ENCODE measurements at regions of chr11 and their contacts with region 1.

Region 1: GRCh38 chr11:45917623-45918330 is at the start of gene PEX16:
- DNase-seq: peak; percentile 97
- H3K4me3 Mint-ChIP-seq: peak within 1 kb of the TSS; percentile 98
- H3K27ac Mint-ChIP-seq: peak within 1 kb of the TSS; percentile 92
- H3K4me1 Mint-ChIP-seq: peaks cover 22% of the 10 kb centered on the region
- H3K27me3 Mint-ChIP-seq: peaks cover 10% of the 10 kb centered on the region
- total RNA-seq, gene PEX16: 37.4 and 44.6 TPM in 2 replicates

Region 2: DNA sequence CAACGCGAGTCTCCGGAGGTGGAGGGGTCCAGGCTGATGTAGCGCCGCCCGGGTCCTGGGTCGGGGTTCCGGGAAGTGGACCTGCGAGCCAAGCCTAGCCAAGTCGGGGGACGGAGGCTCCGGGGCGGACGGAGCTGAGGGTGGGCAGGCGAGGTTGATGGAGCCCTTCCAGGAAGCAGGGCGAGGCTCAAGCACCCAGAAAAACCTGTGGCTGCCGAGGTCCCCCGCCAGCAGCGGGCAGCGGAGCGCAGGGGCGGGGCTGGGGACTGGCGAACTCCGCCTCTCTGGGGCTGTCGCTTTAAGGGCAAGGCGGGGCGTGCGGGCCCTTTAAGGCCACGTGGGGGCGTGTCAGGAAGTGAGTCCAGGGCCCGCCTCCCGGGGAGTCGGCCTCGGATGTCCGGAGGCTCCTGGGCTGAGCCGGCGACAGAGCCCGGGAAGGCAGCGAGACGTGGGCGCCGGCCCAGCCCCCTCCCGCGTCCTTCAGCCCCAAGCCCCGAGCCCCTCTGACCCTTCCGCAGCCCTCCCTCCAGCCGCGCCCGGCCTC is 112.9 kb before region 1 on chr11 and contains the start of gene SLC35C1:
- intact Hi-C with region 1: loop called (anchors 1 kb)
- DNase-seq: peak; percentile 96
- H3K4me3 Mint-ChIP-seq: peak within 1 kb of the TSS; percentile 97
- H3K27ac Mint-ChIP-seq: peak within 1 kb of the TSS; percentile 92
- H3K4me1 Mint-ChIP-seq: peaks cover 38% of the 10 kb centered on the region
- H3K27me3 Mint-ChIP-seq: no peaks in the 10 kb centered on the region
- total RNA-seq, gene SLC35C1: 16.3 and 18.2 TPM in 2 replicates

Region 3: DNA sequence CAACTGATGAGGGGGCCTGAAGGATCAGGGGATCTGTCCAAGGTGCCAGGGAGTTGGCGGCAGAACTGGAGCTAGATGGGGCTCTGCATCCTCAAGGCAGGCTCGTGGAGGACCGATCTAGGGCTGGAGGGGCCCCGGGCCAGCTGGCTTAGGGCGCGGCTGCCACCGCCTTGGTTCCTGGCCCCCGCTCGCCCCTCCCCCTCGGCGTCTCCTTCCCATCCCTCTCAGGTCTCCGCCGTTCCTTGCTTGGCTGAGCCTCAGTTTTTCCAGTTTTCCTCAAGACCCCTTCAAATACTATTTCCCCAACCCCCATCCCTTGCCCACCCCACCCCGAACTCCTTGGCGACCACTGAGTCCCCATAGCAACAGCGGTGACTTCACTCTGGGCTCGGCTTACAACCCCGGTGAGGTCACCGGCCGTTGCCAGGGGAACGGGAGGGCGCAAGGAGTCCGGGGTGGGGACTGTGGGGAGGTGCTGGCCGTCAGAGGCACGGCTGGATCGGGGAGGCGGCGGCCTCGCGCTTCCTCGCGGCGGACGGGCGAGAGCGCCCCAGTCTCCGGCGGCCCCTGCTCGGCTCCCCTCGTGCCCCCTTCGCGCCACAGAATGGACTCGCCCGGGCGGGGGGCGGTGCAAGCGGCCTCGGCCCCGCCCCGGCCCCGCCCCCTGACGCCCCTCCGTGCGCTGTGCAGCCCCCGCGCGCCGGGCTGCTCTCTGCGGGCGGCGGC is 18.2 kb before region 1 on chr11:
- intact Hi-C with region 1: loop called (anchors 1 kb)
- DNase-seq: peak; percentile 66
- H3K4me3 Mint-ChIP-seq: peak overlapping the region; percentile 42
- H3K27ac Mint-ChIP-seq: no peak overlapping the region
- H3K4me1 Mint-ChIP-seq: no peaks in the 10 kb centered on the region
- H3K27me3 Mint-ChIP-seq: peaks cover 30% of the 10 kb centered on the region

Region 4: DNA sequence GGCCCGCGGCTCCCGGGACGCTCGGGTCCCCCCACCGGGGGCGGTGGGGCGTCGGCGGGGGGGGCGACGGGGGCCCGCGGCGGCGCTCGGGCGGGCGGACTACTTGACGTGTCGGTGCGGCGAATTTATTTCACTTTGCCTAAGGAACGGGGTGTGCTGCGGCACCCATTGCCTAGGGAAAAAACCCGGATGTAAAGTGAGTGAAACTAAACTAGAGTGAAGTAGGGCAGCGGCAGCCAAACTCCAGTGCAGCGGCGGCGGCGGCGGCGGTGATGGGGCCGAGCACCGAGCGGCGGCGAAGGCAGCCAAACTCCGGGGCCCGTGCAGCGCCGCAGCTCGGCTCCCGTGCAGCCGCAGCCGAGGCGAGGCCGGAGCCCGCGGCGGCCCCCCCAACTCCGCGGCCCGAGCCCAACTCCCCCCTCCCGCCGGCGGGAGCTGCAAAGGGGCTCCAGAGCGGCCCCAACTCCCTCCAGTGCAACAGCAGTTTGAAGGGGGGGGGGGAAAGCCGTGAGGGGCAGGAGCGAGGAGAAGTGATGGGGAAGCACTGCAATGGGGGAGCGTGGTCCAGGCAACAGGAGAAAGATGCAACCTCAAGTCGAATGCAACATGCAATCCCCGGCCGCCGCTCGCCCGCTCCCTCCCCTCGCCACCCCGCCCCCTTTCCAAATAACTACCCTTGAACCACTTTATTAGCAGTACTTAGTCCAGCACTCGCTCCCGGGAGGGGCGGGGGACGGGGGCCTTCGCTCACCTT is 204.1 kb after region 1 on chr11:
- intact Hi-C with region 1: loop called (anchors 2 kb)
- DNase-seq: peak; percentile 76
- H3K4me3 Mint-ChIP-seq: peak overlapping the region; percentile 86
- H3K27ac Mint-ChIP-seq: peak overlapping the region; percentile 91
- H3K4me1 Mint-ChIP-seq: peaks cover 40% of the 10 kb centered on the region
- H3K27me3 Mint-ChIP-seq: no peaks in the 10 kb centered on the region

Region 5: DNA sequence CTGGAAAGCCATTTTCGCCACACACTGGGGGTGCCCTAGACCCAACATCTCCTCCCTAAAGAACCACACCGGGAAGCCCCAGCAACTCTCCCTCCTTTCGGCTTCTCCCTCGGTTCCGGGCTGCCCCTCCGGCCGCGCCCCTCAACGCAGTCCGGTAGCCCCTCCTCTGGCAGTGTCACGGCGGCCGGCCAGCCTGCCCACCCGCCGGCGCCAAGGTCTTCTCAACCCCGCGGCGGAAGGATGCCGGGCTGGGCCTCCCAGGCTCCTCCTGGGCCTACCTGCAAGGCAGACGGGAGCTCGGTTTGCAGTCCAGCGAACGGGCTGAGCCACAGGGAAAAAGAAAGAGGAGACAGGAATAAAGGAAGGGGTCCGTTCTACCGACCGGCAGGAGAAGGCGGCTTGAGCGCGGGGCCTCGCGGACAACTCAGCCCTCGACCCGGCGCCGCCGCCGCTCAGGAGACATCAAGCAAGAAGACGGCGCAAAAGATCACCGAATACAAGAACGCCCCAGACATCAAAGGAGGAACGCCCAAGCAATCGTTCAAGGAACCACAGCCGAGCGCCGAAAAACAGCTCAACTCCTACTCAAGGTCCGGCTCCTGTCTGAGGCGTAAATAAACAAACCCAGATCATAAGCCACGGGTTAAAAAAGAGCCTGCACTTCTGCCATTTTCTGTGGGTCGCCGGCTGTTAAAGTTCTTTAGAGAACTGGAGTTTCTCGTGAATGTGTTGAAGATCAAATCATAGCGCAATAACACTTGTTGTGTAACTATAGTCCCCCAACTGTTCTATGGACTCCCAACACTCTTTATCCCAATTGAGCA is 676.0 kb after region 1 on chr11 and contains the start of gene AMBRA1:
- intact Hi-C with region 1: loop called (anchors 1 kb)
- DNase-seq: peak; percentile 81
- H3K4me3 Mint-ChIP-seq: peak within 1 kb of the TSS; percentile 93
- H3K27ac Mint-ChIP-seq: peak within 1 kb of the TSS; percentile 87
- H3K4me1 Mint-ChIP-seq: peaks cover 44% of the 10 kb centered on the region
- H3K27me3 Mint-ChIP-seq: no peaks in the 10 kb centered on the region
- total RNA-seq, gene AMBRA1: 35.7 and 37.9 TPM in 2 replicates